Activated naive CD4-positive, alpha-beta T cell treated with anti-CD3 and anti-CD28 coated beads for 36 hours (primary cell): ENCODE measurements at regions of chr15 and their contacts with region 1.

Region 1: DNA sequence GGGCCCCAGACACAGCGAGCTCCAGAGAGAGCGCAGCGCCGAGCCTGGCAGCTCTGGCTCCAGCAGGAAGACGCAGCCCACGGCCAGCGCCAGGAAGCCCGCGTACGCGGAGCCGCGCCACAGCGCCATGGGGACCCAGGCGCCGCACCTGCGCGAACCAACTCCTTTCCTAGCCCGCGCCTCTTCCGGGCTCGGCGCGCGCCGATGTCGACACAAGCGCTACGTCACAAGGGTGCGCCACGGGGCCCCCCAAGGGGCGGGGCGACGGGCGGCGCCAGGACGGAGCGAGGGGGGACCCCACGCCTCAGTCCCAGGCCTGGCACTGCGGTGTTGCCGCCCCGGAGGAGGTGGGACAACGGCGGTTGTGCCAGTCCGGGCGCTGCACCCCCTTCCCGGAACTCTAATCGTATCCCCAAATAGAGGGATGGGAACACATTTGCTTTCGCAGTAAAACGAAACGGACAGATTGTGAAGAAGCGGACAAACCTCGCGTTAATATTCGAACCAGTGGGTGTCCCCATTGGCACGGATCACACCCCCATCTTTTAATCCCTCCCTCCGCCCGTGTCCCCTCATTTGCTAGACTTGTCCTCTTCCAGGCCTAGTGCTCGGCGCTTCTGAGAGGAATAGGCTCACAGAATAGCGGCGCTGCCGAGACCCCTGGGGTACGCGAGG is at the start of gene ADPGK:
- DNase-seq: peak; percentile 90
- H3K4me3 Mint-ChIP-seq: peak within 1 kb of the TSS; percentile 93
- H3K27ac Mint-ChIP-seq: peak within 1 kb of the TSS; percentile 95
- H3K4me1 Mint-ChIP-seq: peaks cover 42% of the 10 kb centered on the region
- H3K27me3 Mint-ChIP-seq: no peaks in the 10 kb centered on the region
- total RNA-seq, gene ADPGK: 41.4 to 43.6 TPM

Region 2: GRCh38 chr15:72473614-72474465 is 309.9 kb before region 1 on chr15 and contains the start of gene ARIH1:
- CTCF ChIA-PET with region 1: no interaction called
- intact Hi-C with region 1: loop called (anchors 1 kb)
- DNase-seq: peak; percentile 94
- H3K4me3 Mint-ChIP-seq: peak within 1 kb of the TSS; percentile 98
- H3K27ac Mint-ChIP-seq: peak within 1 kb of the TSS; percentile 98
- H3K4me1 Mint-ChIP-seq: peaks cover 34% of the 10 kb centered on the region
- H3K27me3 Mint-ChIP-seq: no peaks in the 10 kb centered on the region
- total RNA-seq, gene ARIH1: 174 to 183 TPM

Region 3: GRCh38 chr15:72532991-72533601 is 250.6 kb before region 1 on chr15:
- CTCF ChIA-PET with region 1: no interaction called
- intact Hi-C with region 1: no loop called
- DNase-seq: peak; percentile 36
- H3K4me3 Mint-ChIP-seq: no peak overlapping the region
- H3K27ac Mint-ChIP-seq: no peak overlapping the region
- H3K4me1 Mint-ChIP-seq: peaks cover 47% of the 10 kb centered on the region
- H3K27me3 Mint-ChIP-seq: no peaks in the 10 kb centered on the region

Region 4: DNA sequence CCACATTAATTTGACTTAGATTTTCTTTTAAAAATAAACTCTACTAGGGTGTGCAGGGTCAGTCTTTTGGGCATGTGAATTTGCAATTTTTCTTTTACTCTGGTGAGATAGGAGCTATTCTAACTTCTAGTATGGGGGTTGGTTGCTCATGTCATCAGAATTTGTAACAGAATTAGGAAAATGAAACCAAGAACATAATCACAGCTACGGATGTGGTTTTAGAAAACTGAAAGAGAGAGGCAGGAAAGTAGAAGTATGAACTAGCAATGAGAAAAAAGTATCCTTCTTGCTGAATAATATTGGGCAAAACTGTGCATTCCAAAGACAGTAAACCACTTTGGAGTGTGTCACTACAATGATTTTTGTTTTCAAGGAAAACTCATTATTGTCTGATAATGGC is 43.5 kb before region 1 on chr15:
- CTCF ChIA-PET with region 1: interaction called, 4 read pairs
- intact Hi-C with region 1: loop called (anchors 1 kb)
- DNase-seq: no peak
- H3K4me3 Mint-ChIP-seq: no peak overlapping the region
- H3K27ac Mint-ChIP-seq: peak overlapping the region; percentile 59
- H3K4me1 Mint-ChIP-seq: peaks cover 32% of the 10 kb centered on the region
- H3K27me3 Mint-ChIP-seq: no peaks in the 10 kb centered on the region

Region 5: DNA sequence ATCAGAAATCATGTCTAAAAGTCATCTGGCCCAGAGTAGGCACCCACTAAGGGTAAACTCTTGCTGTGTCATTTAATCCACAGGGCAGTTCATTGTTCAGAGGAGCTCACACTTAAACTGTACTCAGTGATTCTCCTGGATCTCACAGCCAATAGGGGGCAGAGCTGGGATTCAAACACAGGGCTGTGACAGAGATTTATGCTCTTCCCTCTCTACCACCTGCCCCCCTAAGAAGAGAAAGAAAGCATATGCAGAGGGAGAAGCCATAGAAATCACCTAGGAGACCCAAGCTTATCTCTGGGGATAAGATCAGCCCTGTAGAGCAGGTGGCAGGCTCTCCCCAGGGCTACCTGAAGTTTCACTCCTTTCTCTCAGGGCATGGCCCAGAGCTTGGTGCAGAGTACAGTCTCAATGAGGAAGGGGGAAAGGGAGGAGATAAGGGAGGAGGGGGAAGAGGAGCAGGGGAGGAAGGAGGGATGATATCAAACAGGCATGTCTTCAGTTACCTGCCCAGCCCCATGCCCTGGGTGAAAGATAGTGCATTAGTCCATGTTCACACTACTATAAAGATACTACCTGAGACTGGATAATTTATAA is 51.7 kb after region 1 on chr15:
- CTCF ChIA-PET with region 1: no interaction called
- intact Hi-C with region 1: no loop called
- DNase-seq: peak; percentile 14
- H3K4me3 Mint-ChIP-seq: no peak overlapping the region
- H3K27ac Mint-ChIP-seq: no peak overlapping the region
- H3K4me1 Mint-ChIP-seq: no peaks in the 10 kb centered on the region
- H3K27me3 Mint-ChIP-seq: peaks cover 2% of the 10 kb centered on the region

Region 6: DNA sequence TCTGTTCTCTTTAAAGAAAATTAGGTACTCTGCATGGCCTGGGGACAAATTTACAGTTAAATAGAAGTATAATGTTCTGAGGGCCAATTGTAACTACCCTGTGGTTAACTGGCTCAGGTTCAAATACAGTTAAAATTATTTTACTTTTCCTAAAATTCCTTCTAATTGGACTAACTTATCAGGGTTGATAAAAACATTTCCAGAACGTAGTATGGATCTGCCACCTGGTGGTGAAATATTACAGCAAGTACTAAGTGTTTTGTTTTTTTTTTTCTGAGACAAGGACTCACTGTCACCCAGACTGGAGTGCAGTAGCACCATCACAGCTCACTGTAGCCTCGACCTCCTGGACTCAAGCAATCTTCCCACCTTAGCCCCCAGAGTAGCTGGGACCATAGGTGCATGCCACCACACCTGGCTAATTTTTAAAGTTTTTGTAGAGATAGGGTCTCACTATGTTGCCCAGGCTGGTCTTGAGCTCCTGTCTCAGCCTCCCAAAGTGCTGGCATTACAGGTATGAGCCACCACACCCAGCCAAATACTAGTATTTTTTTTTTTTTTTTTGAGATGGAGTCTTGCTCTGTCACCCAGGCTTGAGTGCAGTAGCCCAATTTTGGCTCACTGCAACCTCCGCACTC is 297.7 kb after region 1 on chr15:
- CTCF ChIA-PET with region 1: no interaction called
- intact Hi-C with region 1: loop called (anchors 1 kb)
- DNase-seq: peak; percentile 6
- H3K4me3 Mint-ChIP-seq: no peak overlapping the region
- H3K27ac Mint-ChIP-seq: no peak overlapping the region
- H3K4me1 Mint-ChIP-seq: no peaks in the 10 kb centered on the region
- H3K27me3 Mint-ChIP-seq: no peaks in the 10 kb centered on the region

Region 7: GRCh38 chr15:73650416-73651126 is 866.9 kb after region 1 on chr15:
- CTCF ChIA-PET with region 1: no interaction called
- intact Hi-C with region 1: loop called (anchors 5 kb)
- DNase-seq: peak; percentile 48
- H3K4me3 Mint-ChIP-seq: no peak overlapping the region
- H3K27ac Mint-ChIP-seq: peak overlapping the region; percentile 60
- H3K4me1 Mint-ChIP-seq: peaks cover 28% of the 10 kb centered on the region
- H3K27me3 Mint-ChIP-seq: peaks cover 15% of the 10 kb centered on the region